Mammary epithelial cell (primary cell): ENCODE measurements at regions of chr10 and their contacts with region 1.

Region 1: DNA sequence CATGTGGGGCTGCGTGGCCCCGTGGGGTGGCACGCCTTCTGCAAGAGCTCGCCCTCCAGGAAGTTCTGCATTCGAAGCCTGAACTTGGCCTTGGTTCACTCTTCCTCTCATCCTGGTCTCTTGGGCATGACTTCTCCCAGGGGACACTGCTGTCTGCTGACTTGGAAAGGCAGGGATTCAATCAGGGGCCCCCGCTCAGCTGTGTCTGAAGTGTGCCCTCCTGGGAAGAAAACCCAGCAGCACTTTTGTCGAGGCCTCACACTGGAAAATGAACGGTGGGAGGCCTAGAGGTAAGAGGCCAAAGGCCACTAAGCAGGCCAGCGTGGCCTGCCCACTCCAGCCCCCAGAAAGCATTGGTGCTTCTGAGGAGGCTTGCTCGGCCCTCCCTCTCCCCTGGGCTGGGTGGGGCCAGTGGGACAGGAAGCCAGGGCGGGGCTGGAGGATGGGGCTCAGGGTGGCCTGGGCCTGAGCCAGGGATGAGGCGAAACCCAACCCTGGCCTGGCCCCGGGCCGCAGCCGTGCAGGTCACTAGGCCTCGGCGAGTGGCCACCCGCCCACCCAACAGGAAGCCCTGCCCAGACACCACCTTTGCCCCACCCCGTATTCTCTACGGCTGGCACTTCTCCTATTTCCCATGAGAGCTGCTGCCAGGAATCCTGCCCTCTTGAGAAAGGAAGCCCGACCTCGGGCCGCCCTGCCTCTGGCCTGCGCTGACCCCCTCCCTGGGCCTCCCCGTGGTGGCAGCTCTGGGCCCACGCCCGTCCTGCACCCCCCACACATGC is 81.1 kb downstream of the ZMIZ1 start:
- DNase-seq: peak; percentile 81
- H3K4me3 ChIP-seq: peak overlapping the region in 1 of 3 experiments; percentile 26
- H3K27ac ChIP-seq: peak overlapping the region; percentile 80
- H3K4me1 ChIP-seq: peaks cover 60% of the 10 kb centered on the region
- H3K27me3 ChIP-seq: no peaks in the 10 kb centered on the region
- CTCF ChIP-seq: no peak

Region 2: GRCh38 chr10:79084012-79084971 is 65.6 kb before region 1 on chr10:
- CTCF ChIA-PET with region 1: no interaction called
- dilution Hi-C with region 1: loop called (anchors 5 kb)
- in situ Hi-C with region 1: no loop called
- intact Hi-C with region 1: no loop called
- DNase-seq: peak; percentile 88
- H3K4me3 ChIP-seq: no peak overlapping the region
- H3K27ac ChIP-seq: peak overlapping the region; percentile 85
- H3K4me1 ChIP-seq: peaks cover 78% of the 10 kb centered on the region
- H3K27me3 ChIP-seq: no peaks in the 10 kb centered on the region
- CTCF ChIP-seq: no peak

Region 3: DNA sequence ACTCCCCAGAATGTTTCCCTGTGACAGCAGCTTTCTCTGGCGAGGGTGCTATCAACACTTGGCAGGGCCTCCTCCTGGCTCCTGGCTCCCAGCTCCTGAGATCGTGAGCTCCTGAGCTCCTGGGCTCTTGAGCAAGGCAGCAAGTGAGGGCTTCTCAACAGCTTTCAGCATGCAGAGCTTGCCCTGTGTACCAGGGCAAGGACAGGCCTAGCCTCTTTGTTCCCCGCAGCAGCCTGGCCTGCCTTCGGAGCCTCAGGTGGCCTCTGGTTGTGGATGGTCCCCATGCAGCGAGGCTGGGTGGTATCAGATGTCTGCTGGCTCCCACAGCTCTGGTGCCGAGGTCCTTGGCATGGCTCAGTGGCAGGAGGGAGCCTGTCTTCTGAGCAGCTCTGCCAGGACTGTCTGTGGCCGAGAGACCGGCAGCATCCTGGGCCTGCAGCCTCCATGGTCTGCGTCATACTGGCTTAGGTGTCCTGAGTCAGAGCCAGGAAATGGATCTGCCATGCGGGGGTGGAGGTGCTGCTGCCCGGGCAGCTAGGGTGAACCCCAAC is 36.9 kb before region 1 on chr10:
- CTCF ChIA-PET with region 1: no interaction called
- dilution Hi-C with region 1: loop called (anchors 5 kb)
- in situ Hi-C with region 1: no loop called
- intact Hi-C with region 1: loop called (anchors 2 kb)
- DNase-seq: peak; percentile 91
- H3K4me3 ChIP-seq: no peak overlapping the region
- H3K27ac ChIP-seq: peak overlapping the region; percentile 75
- H3K4me1 ChIP-seq: peaks cover 51% of the 10 kb centered on the region
- H3K27me3 ChIP-seq: no peaks in the 10 kb centered on the region
- CTCF ChIP-seq: no peak

Region 4: DNA sequence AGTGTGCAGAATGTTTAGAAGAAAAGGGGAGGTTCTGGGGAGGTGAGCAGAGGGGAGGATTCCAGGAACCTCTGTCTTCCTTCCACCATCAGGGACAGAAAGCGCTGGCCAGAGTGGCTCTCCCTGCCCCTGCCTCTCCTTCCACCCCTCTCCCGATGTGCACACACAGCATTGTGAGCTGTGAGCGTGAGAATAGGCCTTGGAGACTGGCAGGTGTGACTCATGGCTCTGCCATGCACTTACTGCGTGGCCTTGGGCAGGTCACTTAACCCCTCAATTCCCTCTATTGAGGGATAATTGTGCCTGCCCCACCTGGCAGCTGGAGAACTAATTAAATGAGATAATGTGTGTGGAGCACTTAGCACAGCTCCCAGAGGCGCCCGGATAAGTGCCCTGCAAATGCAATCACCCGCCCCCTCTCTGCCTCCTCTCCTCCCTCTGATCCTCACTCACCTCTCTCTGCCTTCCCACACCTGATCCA is 34.3 kb after region 1 on chr10:
- CTCF ChIA-PET with region 1: no interaction called
- dilution Hi-C with region 1: no loop called
- in situ Hi-C with region 1: no loop called
- intact Hi-C with region 1: loop called (anchors 2 kb)
- DNase-seq: peak; percentile 81
- H3K4me3 ChIP-seq: no peak overlapping the region
- H3K27ac ChIP-seq: peak overlapping the region; percentile 40
- H3K4me1 ChIP-seq: peaks cover 61% of the 10 kb centered on the region
- H3K27me3 ChIP-seq: no peaks in the 10 kb centered on the region
- CTCF ChIP-seq: no peak

Region 5: GRCh38 chr10:79266543-79267312 is 116.9 kb after region 1 on chr10:
- CTCF ChIA-PET with region 1: interaction called, 32 read pairs
- dilution Hi-C with region 1: no loop called
- in situ Hi-C with region 1: no loop called
- intact Hi-C with region 1: no loop called
- DNase-seq: peak; percentile 71
- H3K4me3 ChIP-seq: no peak overlapping the region
- H3K27ac ChIP-seq: peak overlapping the region; percentile 4
- H3K4me1 ChIP-seq: peaks cover 67% of the 10 kb centered on the region
- H3K27me3 ChIP-seq: no peaks in the 10 kb centered on the region
- CTCF ChIP-seq: no peak